Psoas muscle (tissue), 8 donors: ENCODE measurements at regions of chr3 and their contacts with region 1.

Region 1: GRCh38 chr3:170117134-170117533 is 64.4 kb downstream of the PHC3 start:
- DNase-seq: no peak
- ATAC-seq: no peak
- H3K4me3 ChIP-seq: no peak overlapping the region
- H3K27ac ChIP-seq: no peak overlapping the region
- H3K4me1 ChIP-seq: no peaks in the 10 kb centered on the region
- H3K27me3 ChIP-seq: no peaks in the 10 kb centered on the region
- CTCF ChIP-seq: no peak

Region 2: DNA sequence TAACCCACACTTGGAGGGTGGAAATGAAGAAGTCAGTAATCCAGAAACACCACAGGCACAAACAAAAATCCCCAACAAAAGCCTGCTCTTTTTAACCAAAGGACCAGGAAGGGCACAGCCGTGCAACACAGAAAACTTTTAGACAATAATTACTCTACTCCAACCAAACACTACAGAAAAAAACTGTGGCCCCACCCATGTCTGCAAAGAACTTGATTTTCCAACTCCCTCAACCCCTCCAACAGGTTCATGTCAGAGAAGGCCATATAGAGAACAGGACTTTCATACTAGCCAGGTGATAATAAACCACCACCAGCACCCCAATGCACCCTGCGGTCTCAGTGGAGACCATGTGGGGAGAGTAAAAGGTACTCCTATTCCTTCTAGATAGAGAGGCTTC is 47.6 kb after region 1 on chr3:
- intact Hi-C with region 1: loop called in 1 of 2 experiments (anchors 5 kb)
- DNase-seq: no peak
- ATAC-seq: no peak
- H3K4me3 ChIP-seq: no peak overlapping the region
- H3K27ac ChIP-seq: no peak overlapping the region
- H3K4me1 ChIP-seq: peaks cover 3% of the 10 kb centered on the region
- H3K27me3 ChIP-seq: no peaks in the 10 kb centered on the region
- CTCF ChIP-seq: no peak

Region 3: GRCh38 chr3:170387950-170388349 is 270.8 kb after region 1 on chr3:
- intact Hi-C with region 1: no loop called
- DNase-seq: no peak
- ATAC-seq: no peak
- H3K4me3 ChIP-seq: no peak overlapping the region
- H3K27ac ChIP-seq: no peak overlapping the region
- H3K4me1 ChIP-seq: peaks cover 3% of the 10 kb centered on the region
- H3K27me3 ChIP-seq: no peaks in the 10 kb centered on the region
- CTCF ChIP-seq: no peak

Region 4: DNA sequence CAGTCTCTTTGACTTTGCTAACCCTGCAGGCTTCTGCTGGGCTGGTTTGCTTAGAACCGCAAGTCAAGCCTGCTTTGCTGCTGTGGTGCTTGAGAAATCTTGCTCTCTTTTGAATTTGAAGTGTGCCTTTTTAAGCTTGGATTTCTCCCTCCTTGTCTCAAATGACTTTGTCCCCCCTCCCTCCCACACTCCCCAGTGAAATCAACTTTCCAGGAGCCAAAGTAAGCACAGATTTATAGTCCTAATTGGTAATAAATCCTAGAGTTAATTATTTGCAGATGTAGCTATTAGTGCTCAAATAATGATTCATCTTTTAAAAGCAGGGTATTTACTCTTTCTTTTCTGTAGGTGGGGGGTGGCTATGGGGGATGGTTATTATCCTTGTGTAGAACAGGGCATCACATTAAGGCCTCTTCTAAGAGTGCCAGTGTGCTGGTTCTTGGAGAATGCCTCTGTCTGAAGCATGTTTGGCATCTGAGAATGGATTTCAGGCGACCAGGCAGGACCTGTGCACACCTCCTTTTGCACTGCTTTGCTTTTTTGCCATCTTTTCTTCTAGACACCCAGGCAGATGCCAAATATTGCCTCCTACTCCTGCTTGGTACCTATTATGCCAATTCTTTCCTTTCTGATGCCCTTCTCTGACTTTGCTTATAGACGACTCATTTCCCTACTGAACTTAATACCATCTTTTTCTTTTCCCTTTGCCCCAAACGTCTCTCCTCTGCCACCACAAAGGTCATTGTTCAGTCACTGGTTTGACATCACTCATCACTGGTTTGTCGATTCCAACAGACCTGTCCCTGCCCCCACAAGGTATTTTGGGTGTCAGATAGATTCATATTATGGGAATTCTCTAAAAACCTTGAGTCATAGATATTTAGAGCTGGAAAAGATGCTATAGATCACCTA is 352.3 kb after region 1 on chr3:
- intact Hi-C with region 1: no loop called
- DNase-seq: no peak
- ATAC-seq: no peak
- H3K4me3 ChIP-seq: no peak overlapping the region
- H3K27ac ChIP-seq: no peak overlapping the region
- H3K4me1 ChIP-seq: no peaks in the 10 kb centered on the region
- H3K27me3 ChIP-seq: peaks cover 0 to 5% (median 0%) of the 10 kb centered on the region in 3 donors
- CTCF ChIP-seq: no peak